Panc1 (cell line): ENCODE measurements at regions of chr10 and their contacts with region 1.

Region 1: DNA sequence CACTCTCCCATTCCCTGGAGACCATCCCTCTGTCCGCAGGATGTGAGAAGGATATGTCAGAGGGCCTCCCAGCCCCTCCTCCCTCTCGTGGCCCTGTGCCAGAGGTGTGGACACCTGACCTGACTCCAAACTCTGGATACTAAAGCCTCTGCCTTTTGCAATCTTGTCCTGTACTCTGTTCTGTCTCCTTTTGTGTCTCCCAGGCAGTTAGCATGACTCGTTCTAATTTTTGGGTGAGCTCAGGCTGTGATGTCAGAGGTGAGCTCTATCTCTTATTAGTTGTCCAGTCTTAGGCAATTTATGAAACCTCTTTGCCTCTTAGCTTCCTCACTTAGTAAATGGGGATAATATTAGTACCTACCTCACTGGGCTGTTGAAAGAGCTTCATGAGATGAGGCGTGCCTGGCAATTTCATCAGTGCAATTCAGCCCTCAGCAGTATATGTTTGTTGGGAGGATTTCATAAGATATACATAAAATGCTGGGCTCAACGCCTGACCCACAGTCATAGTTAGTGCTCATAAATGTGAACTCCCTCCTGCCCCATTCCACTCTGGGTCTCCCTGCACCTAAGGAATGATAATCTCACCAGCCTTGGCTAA is 10.9 kb downstream of the MARVELD1 start:
- DNase-seq: no peak
- ATAC-seq: no peak
- H3K4me3 ChIP-seq: no peak overlapping the region
- H3K27ac ChIP-seq: no peak overlapping the region
- H3K4me1 ChIP-seq: no peaks in the 10 kb centered on the region
- H3K27me3 ChIP-seq: no peaks in the 10 kb centered on the region
- CTCF ChIP-seq: no peak

Region 2: GRCh38 chr10:97991871-97992270 is 267.4 kb after region 1 on chr10:
- CTCF ChIA-PET with region 1: interaction called, 10 read pairs
- POLR2A ChIA-PET with region 1: no interaction called
- in situ Hi-C with region 1: no loop called
- intact Hi-C with region 1: no loop called
- DNase-seq: no peak
- ATAC-seq: no peak
- H3K4me3 ChIP-seq: no peak overlapping the region
- H3K27ac ChIP-seq: no peak overlapping the region
- H3K4me1 ChIP-seq: no peaks in the 10 kb centered on the region
- H3K27me3 ChIP-seq: peaks cover 33% of the 10 kb centered on the region
- CTCF ChIP-seq: no peak